Adrenal gland (tissue), 19 donors: ENCODE measurements at regions of chr15 and their contacts with region 1.

Region 1: GRCh38 chr15:84818261-84819131 is 1.3 kb downstream of the ALPK3 start:
- DNase-seq: peak; percentile 65 to 89 (median 82)
- H3K4me3 ChIP-seq: peak overlapping the region in 1 of 4 donors; percentile 43
- H3K27ac ChIP-seq: peak overlapping the region; percentile 72 to 95 (median 91)
- H3K4me1 ChIP-seq: peaks cover 20 to 50% of the 10 kb centered on the region in 2 donors
- H3K27me3 ChIP-seq: no peaks in the 10 kb centered on the region
- CTCF ChIP-seq: no peak
- POLR2A ChIP-seq: peak in 1 of 2 donors; percentile 56

Region 2: DNA sequence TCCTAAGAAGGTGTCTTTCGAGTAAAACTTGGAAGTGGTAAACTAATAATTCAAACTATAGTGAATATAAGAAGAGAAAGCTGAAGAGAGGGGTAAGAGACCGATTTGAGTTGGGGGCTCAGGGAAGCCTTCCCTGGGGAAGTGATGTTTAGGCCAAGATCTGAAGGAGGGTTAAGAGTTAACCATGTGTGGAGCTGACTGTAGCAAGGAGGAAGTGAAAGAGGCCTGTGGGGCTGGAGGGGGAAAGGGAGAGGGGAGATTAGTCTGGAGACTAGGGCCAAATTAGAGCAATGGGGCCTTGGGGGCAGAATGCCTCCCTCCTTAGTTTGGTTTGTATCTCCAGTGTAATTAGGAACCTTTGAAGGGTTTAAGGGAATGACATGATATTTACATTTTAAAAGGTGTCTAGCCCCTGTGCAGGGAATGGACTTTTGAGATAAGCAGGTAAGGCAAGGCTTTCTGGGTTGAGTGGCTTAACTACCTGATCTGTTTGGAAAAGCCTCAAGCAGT is 67.9 kb before region 1 on chr15:
- intact Hi-C with region 1: loop called in 1 of 2 experiments (anchors 10 kb)
- DNase-seq: no peak
- H3K4me3 ChIP-seq: peak overlapping the region in 1 of 4 donors; percentile 78
- H3K27ac ChIP-seq: peak overlapping the region in 1 of 5 donors; percentile 99
- H3K4me1 ChIP-seq: peaks cover 29 to 68% of the 10 kb centered on the region in 2 donors
- H3K27me3 ChIP-seq: no peaks in the 10 kb centered on the region
- CTCF ChIP-seq: no peak
- POLR2A ChIP-seq: no peak

Region 3: GRCh38 chr15:84967380-84967779 is 148.9 kb after region 1 on chr15:
- intact Hi-C with region 1: no loop called
- DNase-seq: peak in 2 of 7 donors; percentile 14 to 29
- H3K4me3 ChIP-seq: no peak overlapping the region
- H3K27ac ChIP-seq: no peak overlapping the region
- H3K4me1 ChIP-seq: peaks cover 6 to 11% of the 10 kb centered on the region in 2 donors
- H3K27me3 ChIP-seq: no peaks in the 10 kb centered on the region
- CTCF ChIP-seq: no peak
- POLR2A ChIP-seq: no peak